Ascending aorta (tissue), 2 donors: ENCODE measurements at regions of chr16 and their contacts with region 1.

Region 1: DNA sequence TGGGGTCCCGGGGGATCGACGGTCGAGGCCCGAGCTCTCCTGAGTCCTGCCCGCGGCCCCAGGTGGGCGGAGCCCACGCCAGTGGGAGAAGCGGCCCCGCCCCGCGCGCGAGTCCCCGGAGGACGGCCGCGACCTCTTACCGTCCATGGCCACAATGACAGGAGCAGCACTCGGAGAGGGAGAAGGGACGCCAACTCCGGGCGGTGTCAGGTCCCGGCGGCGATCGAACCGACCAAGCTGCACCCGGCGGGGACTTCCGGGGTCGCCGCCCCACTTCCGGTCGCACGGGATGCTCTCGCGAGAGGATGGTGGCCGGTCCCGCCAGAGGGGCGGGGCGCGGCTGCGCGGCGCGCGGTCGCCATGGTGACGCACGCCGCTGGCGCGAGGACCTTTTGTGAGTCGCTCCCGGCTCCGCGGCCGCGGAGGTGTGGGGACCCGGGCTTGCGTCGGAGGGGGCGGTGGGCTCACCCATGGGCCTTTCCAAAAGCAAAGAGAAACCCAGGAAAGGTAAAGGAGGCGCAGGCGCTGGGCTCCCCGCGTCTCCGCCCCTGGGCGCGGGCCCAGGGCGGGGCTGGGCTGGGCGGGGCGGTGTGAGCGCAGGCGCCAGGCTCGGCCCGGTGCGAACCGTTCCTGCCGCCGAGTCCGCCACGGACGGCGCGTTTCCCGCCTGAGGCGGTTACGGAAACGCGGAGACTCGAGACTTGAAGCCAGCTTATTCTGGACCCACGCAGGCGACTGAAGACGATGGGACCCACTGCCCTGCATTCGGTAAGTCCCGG is at the starts of genes CHMP1A and SPATA33:
- DNase-seq: peak; percentile 30 to 92
- H3K4me3 ChIP-seq: peak within 1 kb of the TSS; percentile 78 to 95
- H3K27ac ChIP-seq: peak within 1 kb of the TSS; percentile 72 to 93
- H3K4me1 ChIP-seq: peaks cover 3 to 15% of the 10 kb centered on the region in 2 donors
- H3K27me3 ChIP-seq: no peaks in the 10 kb centered on the region
- CTCF ChIP-seq: no peak
- total RNA-seq, gene CHMP1A: 153 TPM
- total RNA-seq, gene SPATA33: 0.21 TPM

Region 2: DNA sequence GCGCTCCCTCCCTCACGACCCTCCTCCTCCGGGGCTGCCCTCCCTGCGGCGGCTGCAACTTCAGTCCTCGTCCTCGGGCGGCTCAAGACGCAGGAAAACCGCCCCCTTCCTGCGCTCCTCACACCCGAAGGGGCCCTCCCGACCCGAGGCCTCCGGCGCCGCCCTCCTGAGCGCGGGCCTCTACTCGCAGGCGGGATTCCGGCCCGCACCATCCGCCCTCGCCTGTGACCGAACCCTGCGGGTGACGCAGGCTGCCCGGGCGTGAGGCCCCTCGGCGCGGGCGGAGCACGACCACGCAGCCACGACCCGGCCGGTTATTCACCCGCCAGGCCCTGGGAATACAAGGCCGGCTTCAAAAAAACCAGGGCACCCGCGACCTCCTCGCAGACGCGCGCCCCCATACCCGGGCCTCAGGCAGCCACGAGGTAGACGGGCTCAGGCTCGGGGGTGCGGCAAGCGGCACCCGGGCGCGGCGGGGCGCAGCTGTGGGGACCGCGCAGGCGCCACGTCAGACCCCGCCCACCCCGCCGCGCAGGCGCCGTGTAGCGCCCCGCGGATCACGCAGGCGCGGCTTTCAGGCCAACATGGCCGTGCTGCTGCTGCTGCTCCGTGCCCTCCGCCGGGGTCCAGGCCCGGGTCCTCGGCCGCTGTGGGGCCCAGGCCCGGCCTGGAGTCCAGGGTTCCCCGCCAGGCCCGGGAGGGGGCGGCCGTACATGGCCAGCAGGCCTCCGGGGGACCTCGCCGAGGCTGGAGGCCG is 149.6 kb before region 1 on chr16 and contains the start of gene SPG7:
- intact Hi-C with region 1: loop called (anchors 5 kb)
- DNase-seq: peak; percentile 19 to 87
- H3K4me3 ChIP-seq: peak within 1 kb of the TSS; percentile 66 to 97
- H3K27ac ChIP-seq: peak within 1 kb of the TSS; percentile 94 to 96
- H3K4me1 ChIP-seq: peaks cover 8 to 24% of the 10 kb centered on the region in 2 donors
- H3K27me3 ChIP-seq: no peaks in the 10 kb centered on the region
- CTCF ChIP-seq: no peak
- total RNA-seq, gene SPG7: 108 TPM

Region 3: DNA sequence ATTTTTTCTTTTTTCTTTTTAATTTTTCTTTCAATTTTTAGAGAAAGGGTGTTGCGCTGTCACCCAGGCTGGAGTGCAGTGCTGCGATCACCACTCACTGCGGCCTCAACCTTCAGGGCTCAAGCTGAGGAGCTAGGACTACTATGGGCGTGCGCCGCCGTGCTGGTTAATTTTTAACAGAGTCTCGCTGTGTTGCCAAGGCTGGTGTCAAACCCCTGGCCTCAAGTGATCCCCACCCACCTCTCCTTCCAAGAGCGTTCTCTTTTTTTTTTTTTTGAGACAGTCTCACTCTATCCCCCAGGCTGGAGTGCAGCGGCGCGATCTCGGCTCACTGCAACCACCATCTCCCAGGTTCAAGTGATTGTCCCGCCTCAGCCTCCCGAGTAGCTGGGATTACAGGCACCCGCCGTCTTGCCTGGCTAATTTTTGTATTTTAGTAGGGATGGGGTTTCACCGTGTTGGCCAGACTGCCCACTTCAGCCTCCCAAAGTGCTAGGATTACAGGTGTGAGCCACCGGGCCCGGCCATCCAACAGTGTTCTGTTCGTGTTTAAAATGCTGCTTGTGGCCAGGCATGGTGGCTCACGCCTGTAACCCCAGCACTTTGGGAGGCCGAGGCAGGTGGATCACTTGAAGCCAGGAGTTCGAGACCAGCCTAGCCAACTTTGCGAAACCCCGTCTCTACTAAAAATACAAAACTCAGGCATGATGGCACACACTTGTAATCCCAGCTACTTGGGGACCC is 111.6 kb before region 1 on chr16:
- intact Hi-C with region 1: no loop called
- DNase-seq: no peak
- H3K4me3 ChIP-seq: no peak overlapping the region
- H3K27ac ChIP-seq: no peak overlapping the region
- H3K4me1 ChIP-seq: no peaks in the 10 kb centered on the region
- H3K27me3 ChIP-seq: no peaks in the 10 kb centered on the region
- CTCF ChIP-seq: no peak

Region 4: DNA sequence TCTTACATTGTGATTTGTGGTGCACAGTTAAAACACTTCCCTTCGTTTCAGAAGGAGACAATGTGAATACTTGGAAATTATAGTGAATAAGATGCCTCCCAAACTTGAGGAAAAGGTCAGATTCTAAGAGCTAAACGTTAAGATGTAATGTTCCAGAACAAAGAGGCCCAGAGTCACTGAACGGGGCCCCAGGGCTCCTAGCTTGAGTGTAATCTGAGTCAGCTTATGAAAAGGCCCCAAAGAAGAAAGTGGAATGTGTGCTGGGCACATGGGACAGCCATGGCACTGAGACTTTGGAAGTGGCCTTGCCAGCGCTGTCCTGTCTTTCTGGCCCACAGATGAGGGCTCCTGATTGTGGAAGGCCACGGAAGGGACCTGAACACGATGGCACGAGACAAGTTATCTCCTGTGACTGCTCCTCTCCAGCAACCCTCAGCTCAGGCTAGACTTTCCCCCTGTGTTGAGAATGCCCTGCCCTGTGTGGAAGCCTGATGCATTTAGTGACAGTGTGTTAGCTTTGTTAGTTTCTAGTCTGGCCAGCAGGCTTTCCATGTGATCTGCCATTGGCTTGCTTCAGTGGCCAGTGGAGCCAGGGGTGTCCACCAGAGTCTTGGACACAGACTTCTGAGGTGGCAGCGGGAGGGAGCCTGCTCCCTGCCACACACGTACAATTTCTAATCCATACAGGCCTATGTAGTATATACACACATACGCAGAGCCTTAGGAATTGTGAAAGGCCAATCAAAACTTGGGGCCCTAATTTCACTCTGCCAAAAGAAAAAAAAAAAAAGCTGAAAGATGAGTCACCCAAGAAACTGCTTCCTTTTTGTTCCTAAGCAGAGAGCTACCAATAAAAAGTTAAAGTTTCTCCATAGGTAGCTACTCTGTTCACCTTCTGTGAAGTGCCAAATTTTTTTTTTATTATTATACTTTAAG is 13.1 kb after region 1 on chr16:
- intact Hi-C with region 1: no loop called
- DNase-seq: no peak
- H3K4me3 ChIP-seq: no peak overlapping the region
- H3K27ac ChIP-seq: no peak overlapping the region
- H3K4me1 ChIP-seq: no peaks in the 10 kb centered on the region
- H3K27me3 ChIP-seq: no peaks in the 10 kb centered on the region
- CTCF ChIP-seq: no peak

Region 5: DNA sequence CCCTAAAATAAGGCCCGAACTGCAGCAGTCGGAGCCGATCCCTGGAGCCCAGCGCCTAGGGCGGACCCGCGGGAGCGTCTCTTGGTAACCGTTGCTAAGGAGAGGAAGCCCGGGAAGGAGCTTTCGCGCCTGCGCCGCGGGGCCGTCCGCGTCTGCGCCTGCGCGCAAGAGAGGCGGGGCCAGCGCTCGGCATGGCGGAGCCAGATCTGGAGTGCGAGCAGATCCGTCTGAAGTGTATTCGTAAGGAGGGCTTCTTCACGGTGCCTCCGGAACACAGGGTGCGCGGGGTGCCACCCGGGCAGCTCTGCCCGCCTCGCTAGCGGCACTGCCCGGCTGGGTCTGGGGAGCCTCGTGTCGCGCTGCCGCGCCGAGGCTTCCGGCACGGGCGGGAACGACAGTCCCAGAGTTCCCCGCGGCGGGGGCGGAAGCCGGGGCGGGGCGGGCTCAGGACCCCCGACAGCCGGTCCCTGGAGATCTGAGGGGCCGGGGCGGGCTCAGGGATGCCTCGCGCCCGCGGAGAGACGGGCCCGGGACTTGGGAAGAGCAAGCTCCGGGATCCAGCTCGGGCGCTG is 29.0 kb after region 1 on chr16 and contains the start of gene CDK10:
- intact Hi-C with region 1: loop called (anchors 1 kb)
- DNase-seq: peak; percentile 42 to 93
- H3K4me3 ChIP-seq: peak within 1 kb of the TSS; percentile 63 to 80
- H3K27ac ChIP-seq: peak within 1 kb of the TSS; percentile 58 to 82
- H3K4me1 ChIP-seq: peaks cover 4 to 5% of the 10 kb centered on the region in 2 donors
- H3K27me3 ChIP-seq: no peaks in the 10 kb centered on the region
- CTCF ChIP-seq: peak in 1 of 3 experiments; percentile 6
- total RNA-seq, gene CDK10: 141 TPM

Region 6: GRCh38 chr16:89720813-89721545 is 63.3 kb after region 1 on chr16 and contains the starts of genes VPS9D1 and ZNF276:
- intact Hi-C with region 1: loop called (anchors 1 kb)
- DNase-seq: peak in 1 of 2 donors; percentile 84
- H3K4me3 ChIP-seq: peak within 1 kb of the TSS; percentile 90 to 91
- H3K27ac ChIP-seq: peak within 1 kb of the TSS; percentile 95 to 97
- H3K4me1 ChIP-seq: peaks cover 11 to 19% of the 10 kb centered on the region in 2 donors
- H3K27me3 ChIP-seq: no peaks in the 10 kb centered on the region
- CTCF ChIP-seq: no peak
- total RNA-seq, gene VPS9D1: 17.2 TPM
- total RNA-seq, gene ZNF276: 30.7 TPM

Region 7: GRCh38 chr16:89737341-89738071 is 79.9 kb after region 1 on chr16:
- intact Hi-C with region 1: no loop called
- DNase-seq: no peak
- H3K4me3 ChIP-seq: no peak overlapping the region
- H3K27ac ChIP-seq: no peak overlapping the region
- H3K4me1 ChIP-seq: no peaks in the 10 kb centered on the region
- H3K27me3 ChIP-seq: no peaks in the 10 kb centered on the region
- CTCF ChIP-seq: no peak